T-cell (primary cell): ENCODE measurements at regions of chr2 and their contacts with region 1.

Region 1: DNA sequence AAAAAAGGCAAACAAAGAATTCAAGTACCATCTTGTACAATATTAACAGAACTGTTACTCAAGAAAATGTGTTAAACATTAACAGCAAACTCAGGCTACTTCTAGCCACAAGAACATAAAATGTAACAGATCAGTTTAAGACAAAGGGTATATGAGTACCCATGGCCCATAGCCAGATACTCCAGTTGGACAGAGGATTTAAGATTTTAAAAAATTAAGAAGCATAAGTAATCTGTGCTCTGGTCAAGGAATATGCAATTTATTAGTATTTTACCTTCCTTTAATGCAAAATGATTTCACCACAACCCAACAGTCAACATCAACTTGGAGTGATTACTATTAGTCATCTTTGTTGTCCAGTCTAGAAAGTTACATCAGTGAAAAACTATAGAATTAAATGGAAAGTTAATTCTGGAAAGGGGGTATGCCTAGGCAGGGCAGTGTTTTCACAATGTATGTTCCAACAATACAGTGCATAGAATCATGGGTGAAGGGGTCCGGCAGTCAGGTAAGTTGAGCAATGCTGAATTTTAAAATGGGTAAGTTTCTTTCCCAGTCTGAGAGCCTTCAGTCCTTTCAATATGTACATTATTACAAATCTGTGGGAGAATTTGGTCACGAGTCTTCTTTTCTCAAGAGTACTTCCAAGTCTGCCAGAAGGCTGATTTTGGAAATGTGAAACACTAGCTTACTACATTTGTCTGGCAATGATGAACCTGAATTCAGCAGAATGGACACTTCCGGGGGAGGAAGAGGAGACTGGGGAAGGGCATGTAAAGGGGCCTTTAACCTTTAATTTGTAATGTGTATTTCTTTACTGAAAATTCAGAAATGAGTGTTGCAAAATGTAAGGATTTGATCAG is 34.5 kb downstream of the SFT2D3 start:
- DNase-seq: no peak
- ATAC-seq: no peak
- H3K4me3 ChIP-seq: no peak overlapping the region
- H3K4me3 Mint-ChIP-seq: no peak overlapping the region
- H3K27ac ChIP-seq: no peak overlapping the region
- H3K27ac Mint-ChIP-seq: no peak overlapping the region
- H3K4me1 ChIP-seq: no peaks in the 10 kb centered on the region
- H3K4me1 Mint-ChIP-seq: peaks cover under 1 to 13% (median 11%) of the 10 kb centered on the region in 3 donors
- H3K27me3 ChIP-seq: no peaks in the 10 kb centered on the region
- H3K27me3 Mint-ChIP-seq: no peaks in the 10 kb centered on the region

Region 2: DNA sequence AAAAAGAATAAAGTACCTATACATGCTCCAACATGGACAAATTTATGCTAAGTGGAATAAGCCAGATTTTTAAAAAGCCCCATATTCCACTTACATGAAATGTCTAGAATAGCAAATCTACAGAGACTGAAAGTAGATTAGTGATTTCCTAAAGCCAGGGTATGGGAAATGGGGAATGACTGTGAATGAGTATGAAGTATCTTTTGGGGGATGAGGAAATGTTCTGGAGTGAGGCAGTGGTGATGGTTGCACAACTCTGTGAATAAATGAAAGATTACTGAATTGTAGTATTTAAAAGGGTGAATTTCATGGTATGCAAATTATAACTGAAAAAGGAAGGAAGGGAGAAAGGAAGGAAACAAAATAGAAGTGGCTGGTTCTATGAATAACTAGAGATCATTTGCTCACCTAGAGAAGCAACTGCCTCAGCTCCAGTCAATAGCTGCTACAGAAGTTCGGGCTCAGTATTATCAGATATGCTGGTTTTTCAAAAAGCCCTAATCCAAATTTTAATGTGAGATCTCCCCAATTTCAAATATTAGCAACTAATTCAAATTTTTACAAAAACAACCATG is 387.3 kb before region 1 on chr2:
- CTCF ChIA-PET with region 1: no interaction called
- POLR2A ChIA-PET with region 1: no interaction called
- DNase-seq: no peak
- ATAC-seq: no peak
- H3K4me3 ChIP-seq: no peak overlapping the region
- H3K4me3 Mint-ChIP-seq: no peak overlapping the region
- H3K27ac ChIP-seq: no peak overlapping the region
- H3K27ac Mint-ChIP-seq: no peak overlapping the region
- H3K4me1 ChIP-seq: peaks cover 0 to 3% of the 10 kb centered on the region in 2 experiments
- H3K4me1 Mint-ChIP-seq: peaks cover 71 to 80% (median 72%) of the 10 kb centered on the region in 3 donors
- H3K27me3 ChIP-seq: no peaks in the 10 kb centered on the region
- H3K27me3 Mint-ChIP-seq: no peaks in the 10 kb centered on the region

Region 3: GRCh38 chr2:127796389-127796788 is 60.6 kb after region 1 on chr2:
- CTCF ChIA-PET with region 1: no interaction called
- POLR2A ChIA-PET with region 1: interaction called in 1 of 2 experiments, 14 read pairs
- DNase-seq: no peak
- ATAC-seq: no peak
- H3K4me3 ChIP-seq: no peak overlapping the region
- H3K4me3 Mint-ChIP-seq: peak overlapping the region in 1 of 3 donors; percentile 7
- H3K27ac ChIP-seq: no peak overlapping the region
- H3K27ac Mint-ChIP-seq: peak overlapping the region in 1 of 2 donors; percentile 7
- H3K4me1 ChIP-seq: peaks cover 11 to 43% of the 10 kb centered on the region in 2 experiments
- H3K4me1 Mint-ChIP-seq: peaks cover 71 to 76% (median 75%) of the 10 kb centered on the region in 3 donors
- H3K27me3 ChIP-seq: no peaks in the 10 kb centered on the region
- H3K27me3 Mint-ChIP-seq: no peaks in the 10 kb centered on the region

Region 4: DNA sequence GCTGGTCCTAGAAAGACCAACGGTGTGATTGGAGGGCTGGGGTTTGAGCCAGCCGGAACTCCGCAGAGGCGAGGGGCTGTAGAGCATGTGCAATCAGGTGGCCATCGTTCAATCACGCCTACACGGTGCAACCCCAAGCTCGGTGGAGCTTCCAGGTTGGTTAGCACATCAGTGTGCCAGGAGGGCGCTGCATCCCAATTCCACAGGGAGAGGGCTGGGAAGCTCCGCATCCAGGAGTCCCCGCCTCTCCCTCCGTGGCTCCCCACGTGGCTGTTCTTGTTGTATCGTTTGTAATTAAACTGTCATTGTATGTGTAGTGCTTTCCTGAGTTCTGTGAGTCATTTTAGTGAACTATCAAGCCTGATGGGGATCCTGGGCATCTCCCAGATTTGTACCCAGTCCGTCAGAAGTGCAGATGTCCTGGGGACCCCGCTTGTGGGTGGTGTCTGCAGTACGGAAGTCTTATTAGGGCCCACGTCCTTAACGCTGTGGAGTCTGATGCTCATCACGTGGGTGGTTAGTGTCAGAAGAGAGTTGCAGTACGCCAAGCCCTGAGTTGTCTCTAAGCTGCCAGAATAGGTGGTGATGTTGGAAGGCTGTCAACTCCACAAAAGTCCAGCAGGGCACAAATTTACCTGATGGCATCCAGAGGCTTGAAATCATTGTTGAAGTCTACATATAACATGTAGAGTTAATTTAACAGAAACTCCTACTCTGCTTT is 170.6 kb after region 1 on chr2:
- CTCF ChIA-PET with region 1: no interaction called
- POLR2A ChIA-PET with region 1: no interaction called
- DNase-seq: no peak
- ATAC-seq: no peak
- H3K4me3 ChIP-seq: no peak overlapping the region
- H3K4me3 Mint-ChIP-seq: no peak overlapping the region
- H3K27ac ChIP-seq: no peak overlapping the region
- H3K27ac Mint-ChIP-seq: no peak overlapping the region
- H3K4me1 ChIP-seq: no peaks in the 10 kb centered on the region
- H3K4me1 Mint-ChIP-seq: no peaks in the 10 kb centered on the region
- H3K27me3 ChIP-seq: peaks cover 0 to 32% of the 10 kb centered on the region in 2 experiments
- H3K27me3 Mint-ChIP-seq: peaks cover 12 to 15% of the 10 kb centered on the region in 2 donors

Region 5: DNA sequence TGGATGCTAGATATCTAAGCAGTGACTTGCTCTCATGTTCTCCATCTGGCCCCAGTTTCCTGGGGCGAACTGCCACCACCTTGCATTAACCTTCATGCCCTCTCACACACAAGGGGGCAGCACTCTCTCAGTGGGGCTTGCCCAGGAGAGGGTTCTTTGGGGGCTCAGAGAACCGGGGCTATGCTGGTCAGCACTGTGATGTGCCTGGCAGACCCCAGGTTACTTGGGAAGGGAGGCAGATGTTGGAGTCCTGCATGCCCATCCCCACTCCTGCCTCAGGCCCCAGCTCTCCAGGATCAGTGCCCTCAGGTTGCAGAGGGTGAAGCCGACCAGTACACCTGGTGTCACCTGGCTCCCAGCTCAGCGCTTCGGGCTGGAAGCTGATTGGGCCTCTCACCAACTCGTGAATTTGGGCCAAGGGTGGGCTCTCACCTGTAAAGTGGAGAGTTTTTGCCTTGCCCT is 979.1 kb after region 1 on chr2:
- CTCF ChIA-PET with region 1: no interaction called
- POLR2A ChIA-PET with region 1: no interaction called
- DNase-seq: no peak
- ATAC-seq: no peak
- H3K4me3 ChIP-seq: no peak overlapping the region
- H3K4me3 Mint-ChIP-seq: no peak overlapping the region
- H3K27ac ChIP-seq: no peak overlapping the region
- H3K27ac Mint-ChIP-seq: no peak overlapping the region
- H3K4me1 ChIP-seq: no peaks in the 10 kb centered on the region
- H3K4me1 Mint-ChIP-seq: no peaks in the 10 kb centered on the region
- H3K27me3 ChIP-seq: peaks cover 0 to 32% of the 10 kb centered on the region in 2 experiments
- H3K27me3 Mint-ChIP-seq: peaks cover 18 to 32% of the 10 kb centered on the region in 2 donors